ENCODE measurements at regions of chr17 and their contacts with region 1.

Region 1: GRCh38 chr17:64129764-64130558 is at the start of gene ERN1:
- DNase-seq: peak; percentile 94
- H3K4me3 Mint-ChIP-seq: peak within 1 kb of the TSS; percentile 90
- H3K27ac Mint-ChIP-seq: peak within 1 kb of the TSS; percentile 93
- H3K4me1 Mint-ChIP-seq: peaks cover 56% of the 10 kb centered on the region
- H3K27me3 Mint-ChIP-seq: no peaks in the 10 kb centered on the region
- total RNA-seq, gene ERN1: 45.3 to 47.7 TPM

Region 2: GRCh38 chr17:63919311-63919723 is 210.6 kb before region 1 on chr17:
- CTCF ChIA-PET with region 1: interaction called, 70 read pairs
- POLR2A ChIA-PET with region 1: no interaction called
- intact Hi-C with region 1: loop called (anchors 2 kb)
- DNase-seq: peak; percentile 84
- H3K4me3 Mint-ChIP-seq: peak overlapping the region; percentile 27
- H3K27ac Mint-ChIP-seq: peak overlapping the region; percentile 44
- H3K4me1 Mint-ChIP-seq: peaks cover 6% of the 10 kb centered on the region
- H3K27me3 Mint-ChIP-seq: no peaks in the 10 kb centered on the region

Region 3: GRCh38 chr17:64020056-64020766 is 109.8 kb before region 1 on chr17 and contains the start of gene ICAM2:
- CTCF ChIA-PET with region 1: interaction called, 583 read pairs
- POLR2A ChIA-PET with region 1: interaction called, 85 read pairs
- intact Hi-C with region 1: loop called (anchors 1 kb)
- DNase-seq: peak; percentile 95
- H3K4me3 Mint-ChIP-seq: peak within 1 kb of the TSS; percentile 93
- H3K27ac Mint-ChIP-seq: peak within 1 kb of the TSS; percentile 98
- H3K4me1 Mint-ChIP-seq: peaks cover 64% of the 10 kb centered on the region
- H3K27me3 Mint-ChIP-seq: no peaks in the 10 kb centered on the region
- total RNA-seq, gene ICAM2: 65.0 to 66.7 TPM

Region 4: DNA sequence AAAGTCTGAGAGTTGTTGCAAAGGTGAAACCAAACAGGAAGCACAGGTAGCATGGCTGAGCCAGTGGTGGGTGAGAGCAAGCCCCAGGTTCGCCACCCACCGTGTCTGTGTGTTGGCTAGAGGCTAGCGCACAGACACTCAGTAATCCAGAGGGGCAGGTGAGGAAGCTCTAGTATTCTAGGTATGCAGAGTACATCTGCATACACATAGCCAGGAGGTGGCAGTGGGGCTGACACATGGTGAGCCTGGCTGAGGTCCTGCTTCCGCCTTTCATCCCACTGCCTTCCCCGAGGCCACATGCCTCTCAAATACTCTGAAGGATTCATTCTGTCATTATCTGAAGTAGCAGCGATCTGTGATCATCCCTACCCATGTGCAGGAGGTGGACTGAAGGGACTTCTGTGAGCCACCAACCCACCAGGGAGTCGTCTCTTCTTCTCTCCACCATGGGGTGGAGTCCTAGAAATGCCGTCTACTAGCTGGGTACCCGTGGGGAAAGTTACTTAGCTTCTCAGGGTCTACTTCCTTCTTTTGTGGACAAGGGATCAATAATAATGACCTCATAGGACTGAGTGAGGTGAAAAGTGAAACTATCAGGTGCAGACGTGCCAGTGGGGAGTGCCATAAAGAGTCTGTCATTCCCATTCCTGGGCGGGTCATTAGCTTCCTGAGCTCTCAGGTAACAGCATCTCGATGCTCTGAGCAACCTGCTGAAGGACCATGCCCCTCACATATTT is 73.5 kb before region 1 on chr17:
- CTCF ChIA-PET with region 1: interaction called, 193 read pairs
- POLR2A ChIA-PET with region 1: interaction called, 56 read pairs
- intact Hi-C with region 1: loop called (anchors 1 kb)
- DNase-seq: no peak
- H3K4me3 Mint-ChIP-seq: no peak overlapping the region
- H3K27ac Mint-ChIP-seq: peak overlapping the region; percentile 64
- H3K4me1 Mint-ChIP-seq: peaks cover 55% of the 10 kb centered on the region
- H3K27me3 Mint-ChIP-seq: no peaks in the 10 kb centered on the region

Region 5: DNA sequence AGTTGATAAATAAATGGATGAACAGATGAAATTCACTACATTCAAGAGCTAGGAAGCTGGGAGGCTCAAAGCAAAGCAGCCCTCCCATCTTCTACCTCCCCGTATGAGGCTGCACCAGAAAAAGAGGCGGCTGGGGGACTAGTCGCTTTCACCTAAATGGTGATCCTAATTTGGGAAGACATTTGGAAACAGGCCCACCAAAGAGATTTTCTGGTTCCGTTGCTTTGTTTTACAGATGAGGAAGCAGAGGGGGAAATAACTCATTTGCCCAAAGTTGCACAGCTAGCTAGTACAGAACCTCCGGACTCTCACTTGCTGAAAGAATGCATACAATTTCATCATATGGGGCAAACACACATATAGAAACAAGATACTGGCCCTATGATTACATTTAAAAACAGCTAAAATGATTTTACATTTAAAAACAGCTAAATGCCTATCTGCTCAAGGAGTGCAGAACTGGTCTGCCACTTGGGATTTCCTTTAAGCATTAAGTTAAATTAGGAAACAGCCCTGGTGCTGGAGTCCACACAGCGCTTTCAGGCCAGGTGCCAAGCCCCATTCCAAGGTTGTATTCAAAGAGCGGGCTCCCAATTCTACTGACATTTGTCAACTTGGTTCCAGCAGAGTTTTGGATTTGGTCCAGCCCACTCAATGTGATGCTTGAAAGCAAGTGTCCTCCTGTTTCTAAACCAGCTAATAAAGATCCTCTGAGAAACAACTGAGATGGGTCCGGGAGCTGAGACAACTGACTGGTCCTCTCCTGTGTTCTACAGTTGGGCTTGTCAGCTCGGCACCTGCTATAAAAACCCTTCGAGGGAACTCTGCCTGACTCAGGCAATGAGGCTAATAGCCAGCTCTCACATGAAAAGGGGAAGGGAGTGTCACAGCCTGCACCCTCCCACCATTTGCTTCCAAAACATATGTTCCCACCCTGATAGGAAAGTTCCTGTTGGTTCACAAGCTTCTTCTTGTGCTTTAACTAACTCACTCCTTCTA is 11.7 kb before region 1 on chr17:
- CTCF ChIA-PET with region 1: interaction called, 13 read pairs
- POLR2A ChIA-PET with region 1: interaction called, 35 read pairs
- intact Hi-C with region 1: loop called (anchors 1 kb)
- DNase-seq: no peak
- H3K4me3 Mint-ChIP-seq: no peak overlapping the region
- H3K27ac Mint-ChIP-seq: peak overlapping the region; percentile 71
- H3K4me1 Mint-ChIP-seq: peaks cover 78% of the 10 kb centered on the region
- H3K27me3 Mint-ChIP-seq: no peaks in the 10 kb centered on the region

Region 6: DNA sequence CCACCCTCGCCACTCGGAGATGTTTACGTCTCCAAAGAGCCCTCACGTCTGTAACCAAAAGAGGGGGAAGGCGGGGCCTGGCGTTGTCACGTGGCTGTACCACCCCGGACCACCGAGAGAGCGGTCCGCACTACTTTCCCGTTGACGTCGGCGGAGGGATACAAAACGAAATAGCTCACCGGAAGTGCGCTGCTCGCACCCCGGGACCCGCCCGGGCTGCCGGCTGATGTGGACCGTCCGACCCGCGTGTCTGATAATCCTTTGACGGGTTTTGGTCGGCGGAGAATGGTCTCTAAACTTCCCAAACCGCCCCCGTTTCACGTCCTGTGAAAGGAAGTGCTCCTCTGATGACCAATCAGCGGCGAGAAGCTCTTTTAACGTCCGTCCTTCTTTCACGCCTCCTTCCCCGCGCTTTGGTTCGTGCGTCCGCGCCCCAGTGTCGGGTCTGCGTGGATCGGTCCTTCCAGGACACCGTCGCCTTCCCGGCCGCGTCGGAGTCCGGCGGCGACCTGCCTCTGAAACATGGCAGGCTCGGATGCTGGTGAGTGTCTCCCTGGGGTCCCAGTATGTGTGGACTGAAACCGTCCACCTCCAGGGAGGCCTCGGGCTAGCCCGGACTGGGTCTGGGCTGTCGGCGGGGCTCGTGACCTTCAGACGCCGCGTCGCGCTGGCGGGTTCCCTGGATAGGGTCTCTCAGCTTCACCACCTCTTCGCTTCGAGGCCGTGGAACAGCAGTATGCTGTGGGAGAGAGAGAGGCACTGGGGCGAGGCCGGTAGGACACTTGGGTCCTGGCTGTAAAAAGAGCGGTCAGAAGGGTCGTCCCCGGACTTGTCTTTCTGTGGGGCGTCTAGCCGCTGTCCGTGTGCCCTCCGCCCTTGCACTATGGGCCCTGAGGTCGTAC is 376.9 kb after region 1 on chr17 and contains the start of gene CEP95:
- CTCF ChIA-PET with region 1: interaction called, 3 read pairs
- POLR2A ChIA-PET with region 1: no interaction called
- intact Hi-C with region 1: loop called (anchors 5 kb)
- DNase-seq: peak; percentile 96
- H3K4me3 Mint-ChIP-seq: peak within 1 kb of the TSS; percentile 97
- H3K27ac Mint-ChIP-seq: peak within 1 kb of the TSS; percentile 100
- H3K4me1 Mint-ChIP-seq: peaks cover 48% of the 10 kb centered on the region
- H3K27me3 Mint-ChIP-seq: peaks cover 2% of the 10 kb centered on the region
- total RNA-seq, gene CEP95: 29.9 to 37.8 TPM